Ovary (tissue), 10 donors: ENCODE measurements at regions of chr2 and their contacts with region 1.

Region 1: DNA sequence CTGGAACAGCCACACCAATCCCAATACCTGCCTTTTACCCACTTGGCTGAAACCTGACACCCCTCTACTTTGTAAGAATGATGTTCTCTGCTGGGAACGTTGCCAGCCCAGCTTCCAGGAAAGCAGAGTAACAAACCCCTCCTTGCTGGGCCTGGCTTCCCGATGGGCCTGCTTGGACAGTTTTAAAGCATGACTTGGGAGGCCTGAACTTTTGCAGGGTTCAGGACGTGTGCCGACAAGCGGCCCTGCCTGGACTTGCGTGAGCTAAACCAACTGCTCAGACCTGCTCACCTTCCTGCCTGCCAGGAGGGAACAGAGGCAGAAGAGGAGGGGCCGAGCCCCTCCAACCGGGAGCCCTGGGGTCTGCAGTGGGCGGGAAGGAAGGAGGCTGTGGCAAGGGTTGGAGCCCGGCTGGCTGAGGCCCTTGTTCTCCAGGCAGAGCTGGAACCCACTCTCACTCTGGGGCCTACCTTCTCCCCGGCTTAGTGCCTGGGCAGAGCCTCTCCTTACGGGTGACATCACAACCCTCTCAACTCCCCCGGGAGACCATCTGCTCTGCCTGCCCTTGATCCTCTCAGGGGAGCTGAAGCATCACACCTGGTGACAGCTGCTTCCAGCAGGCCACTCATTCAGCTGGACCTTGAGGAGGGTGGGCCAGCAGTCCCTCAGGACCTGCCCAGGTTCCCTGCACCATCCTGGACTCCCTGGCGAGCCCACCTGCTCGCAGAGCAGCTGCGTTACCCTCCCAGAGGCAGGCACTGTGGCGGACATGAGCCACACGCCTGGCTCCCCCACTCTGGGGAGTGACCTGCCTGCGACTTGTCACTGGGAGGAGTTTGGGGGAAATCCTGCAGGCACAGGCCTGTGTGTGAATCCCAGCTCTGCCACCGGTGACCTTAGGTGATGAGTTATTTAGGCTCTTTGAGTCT is 13.2 kb downstream of the HS6ST1 start:
- DNase-seq: peak; percentile 89 to 96 (median 95)
- H3K4me3 ChIP-seq: no peak overlapping the region
- H3K27ac ChIP-seq: peak overlapping the region; percentile 65 to 83
- H3K4me1 ChIP-seq: peaks cover 71% of the 10 kb centered on the region
- H3K27me3 ChIP-seq: no peaks in the 10 kb centered on the region
- CTCF ChIP-seq: peak in 1 of 3 donors; percentile 14
- EP300 ChIP-seq: no peak
- POLR2A ChIP-seq: no peak

Region 2: GRCh38 chr2:128232965-128233789 is 72.2 kb before region 1 on chr2:
- intact Hi-C with region 1: loop called in 1 of 4 experiments (anchors 5 kb)
- DNase-seq: peak; percentile 78 to 87 (median 83)
- H3K4me3 ChIP-seq: peak overlapping the region; percentile 45
- H3K27ac ChIP-seq: peak overlapping the region; percentile 2 to 61
- H3K4me1 ChIP-seq: no peaks in the 10 kb centered on the region
- H3K27me3 ChIP-seq: no peaks in the 10 kb centered on the region
- CTCF ChIP-seq: peak; percentile 75 to 85 (median 82)
- EP300 ChIP-seq: no peak
- POLR2A ChIP-seq: no peak

Region 3: GRCh38 chr2:128286011-128286721 is 19.3 kb before region 1 on chr2:
- intact Hi-C with region 1: loop called in 1 of 4 experiments (anchors 1 kb)
- DNase-seq: peak in 2 of 5 donors; percentile 48 to 68
- H3K4me3 ChIP-seq: no peak overlapping the region
- H3K27ac ChIP-seq: no peak overlapping the region
- H3K4me1 ChIP-seq: peaks cover 27% of the 10 kb centered on the region
- H3K27me3 ChIP-seq: no peaks in the 10 kb centered on the region
- CTCF ChIP-seq: no peak
- EP300 ChIP-seq: no peak
- POLR2A ChIP-seq: no peak

Region 4: GRCh38 chr2:128765811-128766210 is 460.4 kb after region 1 on chr2:
- intact Hi-C with region 1: no loop called
- DNase-seq: peak in 1 of 5 donors; percentile 15
- H3K4me3 ChIP-seq: no peak overlapping the region
- H3K27ac ChIP-seq: no peak overlapping the region
- H3K4me1 ChIP-seq: no peaks in the 10 kb centered on the region
- H3K27me3 ChIP-seq: no peaks in the 10 kb centered on the region
- CTCF ChIP-seq: no peak
- EP300 ChIP-seq: no peak
- POLR2A ChIP-seq: no peak

Region 5: GRCh38 chr2:128978209-128978608 is 672.8 kb after region 1 on chr2:
- intact Hi-C with region 1: no loop called
- DNase-seq: no peak
- H3K4me3 ChIP-seq: no peak overlapping the region
- H3K27ac ChIP-seq: no peak overlapping the region
- H3K4me1 ChIP-seq: no peaks in the 10 kb centered on the region
- H3K27me3 ChIP-seq: no peaks in the 10 kb centered on the region
- CTCF ChIP-seq: no peak
- EP300 ChIP-seq: no peak
- POLR2A ChIP-seq: no peak

Region 6: DNA sequence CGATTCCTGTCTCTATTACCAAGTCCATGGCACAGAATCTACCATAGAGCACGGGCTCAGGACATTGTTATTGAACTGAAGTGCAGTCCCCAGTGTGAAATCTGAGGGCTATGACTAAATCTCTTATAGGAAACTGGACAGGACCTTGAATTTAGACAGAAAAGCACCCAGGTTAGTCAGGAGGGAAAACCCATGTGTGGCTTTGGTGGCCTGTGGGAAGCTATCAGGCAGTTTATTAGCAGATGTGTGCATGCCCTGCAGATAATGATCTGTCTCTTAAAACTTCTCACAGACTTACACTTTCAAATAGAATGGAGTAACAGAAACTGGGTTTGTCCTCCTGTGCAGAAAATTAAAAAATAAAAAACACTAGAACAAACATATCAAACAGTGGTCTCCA is 1064.0 kb after region 1 on chr2:
- intact Hi-C with region 1: no loop called
- DNase-seq: no peak
- H3K4me3 ChIP-seq: no peak overlapping the region
- H3K27ac ChIP-seq: no peak overlapping the region
- H3K4me1 ChIP-seq: no peaks in the 10 kb centered on the region
- H3K27me3 ChIP-seq: no peaks in the 10 kb centered on the region
- CTCF ChIP-seq: no peak
- EP300 ChIP-seq: no peak
- POLR2A ChIP-seq: no peak